ENCODE measurements at regions of chr10 and their contacts with region 1.

Region 1: DNA sequence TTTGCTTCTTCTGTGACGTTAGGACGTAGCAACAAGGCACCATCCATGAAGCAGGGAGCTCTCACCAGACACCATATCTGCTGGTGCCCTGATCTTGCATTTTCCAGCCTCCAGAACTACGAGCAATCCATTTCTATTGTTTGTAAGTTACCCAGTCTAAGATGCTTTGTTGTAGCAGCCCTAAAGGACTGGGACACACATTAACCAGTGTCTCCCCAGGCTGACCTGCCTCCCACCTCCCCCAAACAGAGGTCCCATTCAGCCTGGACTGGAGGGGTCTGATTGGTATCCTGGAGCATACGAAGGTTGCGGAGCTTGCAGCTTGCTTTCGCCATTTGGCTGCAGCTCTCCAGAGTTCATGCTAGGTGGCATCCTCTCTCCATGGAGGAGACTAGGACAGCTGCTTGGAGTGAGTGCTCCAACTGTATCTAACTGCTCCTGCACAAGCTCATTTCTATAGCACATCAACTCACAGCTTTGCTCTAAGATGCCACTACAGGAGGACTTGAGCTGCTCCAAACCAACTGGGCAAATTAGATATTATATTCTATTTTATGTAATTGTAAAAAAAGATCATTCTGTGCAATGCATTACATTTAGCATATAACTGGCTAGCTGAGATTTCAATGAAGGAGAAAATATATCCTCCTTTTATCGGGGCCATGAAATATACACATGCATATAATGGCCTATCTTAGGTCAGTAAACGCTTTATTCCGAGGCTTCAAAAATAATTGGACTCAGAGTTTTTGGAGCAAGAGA is 8.0 kb upstream of the GRK5 start:
- DNase-seq: peak; percentile 68 to 72
- H3K4me3 ChIP-seq: no peak overlapping the region
- H3K4me1 ChIP-seq: peaks cover 9% of the 10 kb centered on the region
- H3K27me3 ChIP-seq: no peaks in the 10 kb centered on the region

Region 2: DNA sequence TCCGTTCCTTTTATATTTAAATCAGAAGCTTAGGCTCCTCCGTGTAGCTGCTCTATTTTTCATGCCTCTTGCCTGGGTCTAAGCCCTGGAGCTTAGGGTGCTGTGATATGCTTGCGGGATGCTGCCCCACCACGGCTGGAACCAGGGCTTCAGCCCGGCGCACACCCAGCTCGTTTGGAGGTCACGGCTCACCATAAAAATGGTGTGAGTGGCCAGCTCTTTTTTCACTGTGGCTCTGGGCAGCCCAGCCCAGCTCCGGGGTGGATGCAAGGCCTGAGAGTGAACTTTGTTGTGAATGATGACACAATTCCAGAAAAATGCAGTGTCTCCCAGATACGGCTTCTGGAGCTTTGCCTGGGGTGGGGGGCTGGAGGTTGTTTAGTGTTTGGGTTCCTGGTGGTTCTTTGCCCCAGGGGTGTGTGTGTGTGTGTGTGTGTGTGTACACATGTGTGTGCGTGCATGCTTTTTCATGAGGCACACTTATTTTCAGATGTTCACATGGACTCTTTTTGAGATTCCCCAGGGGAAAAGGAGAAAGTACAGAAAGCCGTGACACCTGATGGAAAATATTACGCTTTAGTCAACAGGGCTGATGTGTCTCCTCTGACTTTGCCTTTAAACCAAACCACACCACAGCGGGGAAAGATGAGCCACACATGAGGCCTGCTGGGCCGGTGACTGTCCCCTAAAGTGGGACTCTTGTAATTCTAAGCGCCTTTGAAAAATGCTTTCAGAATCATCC is 54.2 kb after region 1 on chr10:
- in situ Hi-C with region 1: no loop called
- DNase-seq: peak in 1 of 2 experiments; percentile 26
- H3K4me3 ChIP-seq: no peak overlapping the region
- H3K4me1 ChIP-seq: peaks cover 13% of the 10 kb centered on the region
- H3K27me3 ChIP-seq: no peaks in the 10 kb centered on the region

Region 3: DNA sequence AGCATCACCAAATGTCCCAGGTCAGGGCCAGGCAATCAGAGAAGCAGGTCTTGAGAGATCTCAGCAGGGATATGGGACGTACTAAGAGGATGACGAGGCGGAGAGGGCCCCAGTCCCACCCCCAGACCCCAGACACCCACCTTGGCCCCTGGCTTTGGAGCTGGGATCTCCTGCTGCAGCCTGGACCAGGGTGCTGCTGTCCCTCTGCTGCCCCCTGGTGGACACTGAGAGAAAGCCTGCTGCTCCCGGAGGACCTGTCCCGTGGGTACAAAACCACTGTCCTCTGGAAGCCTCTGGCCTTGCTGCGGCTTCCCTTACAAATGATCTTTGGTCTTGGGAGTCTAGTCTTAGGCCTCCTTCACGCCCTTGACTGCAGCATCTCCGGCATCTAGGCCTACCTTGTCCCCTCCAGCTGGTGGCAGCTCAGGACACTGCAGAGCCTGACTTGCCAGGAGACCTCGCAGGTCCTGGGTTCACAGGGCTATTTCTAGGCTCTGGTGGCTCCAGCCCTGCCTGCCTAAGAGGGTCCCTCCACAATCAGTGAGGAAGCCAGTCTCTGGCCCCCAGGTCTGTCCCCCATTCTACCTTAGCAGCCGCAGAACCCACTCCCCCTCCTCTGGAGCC is 246.0 kb after region 1 on chr10:
- in situ Hi-C with region 1: loop called (anchors 10 kb)
- DNase-seq: peak; percentile 53 to 91
- H3K4me3 ChIP-seq: no peak overlapping the region
- H3K4me1 ChIP-seq: no peaks in the 10 kb centered on the region
- H3K27me3 ChIP-seq: no peaks in the 10 kb centered on the region